Gastrocnemius medialis (tissue), 4 donors: ENCODE measurements at regions of chr20 and their contacts with region 1.

Region 1: GRCh38 chr20:50070991-50071888 is 41.7 kb downstream of the UBE2V1 start:
- DNase-seq: peak; percentile 60 to 79
- ATAC-seq: peak; percentile 88 to 92
- H3K4me3 ChIP-seq: peak overlapping the region in 3 of 4 donors; percentile 41 to 62 (median 44)
- H3K27ac ChIP-seq: no peak overlapping the region
- H3K4me1 ChIP-seq: peaks cover 5 to 9% of the 10 kb centered on the region in 2 donors
- H3K27me3 ChIP-seq: no peaks in the 10 kb centered on the region
- CTCF ChIP-seq: peak; percentile 99 to 100 (median 99)
- POLR2A ChIP-seq: no peak

Region 2: DNA sequence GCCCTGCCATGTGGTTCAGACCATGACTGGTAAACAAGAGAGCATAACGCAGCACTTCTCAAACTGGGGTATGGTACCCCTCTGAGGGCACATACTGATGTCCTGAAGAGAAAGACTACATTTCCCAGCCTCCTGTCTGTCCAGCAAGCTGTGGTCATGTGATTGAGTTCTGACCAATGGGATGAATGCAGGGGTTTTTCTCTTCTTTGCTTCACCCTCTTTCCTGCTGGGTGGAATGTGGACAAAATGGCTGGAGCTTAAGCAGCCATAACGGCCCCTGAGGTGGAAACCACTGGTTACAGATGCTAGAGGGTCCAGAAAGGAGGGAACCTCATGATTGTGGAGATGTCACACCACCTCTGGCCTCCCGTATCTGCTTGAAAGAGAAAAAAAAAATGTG is 569.3 kb before region 1 on chr20:
- in situ Hi-C with region 1: no loop called
- intact Hi-C with region 1: loop called (anchors 5 kb)
- DNase-seq: no peak
- ATAC-seq: peak; percentile 61 to 76
- H3K4me3 ChIP-seq: no peak overlapping the region
- H3K27ac ChIP-seq: no peak overlapping the region
- H3K4me1 ChIP-seq: peaks cover 0 to 5% of the 10 kb centered on the region in 2 donors
- H3K27me3 ChIP-seq: no peaks in the 10 kb centered on the region
- CTCF ChIP-seq: no peak
- POLR2A ChIP-seq: no peak